Right cardiac atrium (tissue), 5 donors: ENCODE measurements at regions of chr5 and their contacts with region 1.

Region 1: DNA sequence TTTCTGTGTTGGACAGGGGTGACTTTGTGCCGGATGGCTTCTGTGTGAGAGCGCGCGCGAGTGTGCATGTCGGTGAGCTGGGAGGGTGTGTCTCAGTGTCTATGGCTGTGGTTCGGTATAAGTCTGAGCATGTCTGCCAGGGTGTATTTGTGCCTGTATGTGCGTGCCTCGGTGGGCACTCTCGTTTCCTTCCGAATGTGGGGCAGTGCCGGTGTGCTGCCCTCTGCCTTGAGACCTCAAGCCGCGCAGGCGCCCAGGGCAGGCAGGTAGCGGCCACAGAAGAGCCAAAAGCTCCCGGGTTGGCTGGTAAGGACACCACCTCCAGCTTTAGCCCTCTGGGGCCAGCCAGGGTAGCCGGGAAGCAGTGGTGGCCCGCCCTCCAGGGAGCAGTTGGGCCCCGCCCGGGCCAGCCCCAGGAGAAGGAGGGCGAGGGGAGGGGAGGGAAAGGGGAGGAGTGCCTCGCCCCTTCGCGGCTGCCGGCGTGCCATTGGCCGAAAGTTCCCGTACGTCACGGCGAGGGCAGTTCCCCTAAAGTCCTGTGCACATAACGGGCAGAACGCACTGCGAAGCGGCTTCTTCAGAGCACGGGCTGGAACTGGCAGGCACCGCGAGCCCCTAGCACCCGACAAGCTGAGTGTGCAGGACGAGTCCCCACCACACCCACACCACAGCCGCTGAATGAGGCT is at the start of gene ADRB2:
- DNase-seq: peak; percentile 95 to 98 (median 97)
- ATAC-seq: peak; percentile 98 to 99
- H3K4me3 ChIP-seq: peak within 1 kb of the TSS; percentile 55
- H3K27ac ChIP-seq: peak within 1 kb of the TSS; percentile 96
- H3K4me1 ChIP-seq: no peaks in the 10 kb centered on the region
- H3K27me3 ChIP-seq: no peaks in the 10 kb centered on the region
- total RNA-seq, gene ADRB2: 5.0 to 9.2 (median 7.9) TPM

Region 2: DNA sequence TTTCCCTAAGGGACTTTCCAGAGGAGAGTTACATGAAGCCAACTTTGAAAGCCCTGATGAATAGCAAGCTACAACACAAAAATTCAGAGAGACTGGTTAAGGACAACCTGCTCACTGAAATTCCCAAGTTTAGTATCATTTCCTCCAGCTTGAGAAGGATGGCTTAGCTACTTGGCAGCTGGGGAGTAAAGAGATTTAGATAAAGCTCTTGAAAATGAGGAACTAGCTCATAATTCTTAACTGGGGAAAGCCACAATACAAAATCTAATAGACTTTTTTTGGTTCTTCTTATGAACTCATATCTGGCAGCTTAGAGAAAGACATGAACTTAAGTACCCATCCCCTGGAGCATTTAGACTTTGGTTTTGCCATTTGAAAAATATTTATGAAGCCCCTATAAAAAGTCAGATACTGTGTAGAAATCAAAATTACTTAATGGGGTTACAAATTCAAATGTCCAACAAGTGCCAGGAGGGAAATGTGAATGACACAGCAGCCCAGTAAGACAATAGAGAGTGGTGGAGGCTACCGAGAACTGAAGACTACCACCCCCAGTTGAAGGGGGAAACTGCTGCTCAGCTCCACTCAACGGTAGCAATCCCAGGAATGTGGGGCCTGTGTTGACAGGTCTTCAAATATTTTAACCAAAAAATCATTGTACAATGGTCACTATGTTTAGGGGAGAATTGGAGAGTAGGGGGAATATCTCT is 79.2 kb before region 1 on chr5:
- intact Hi-C with region 1: loop called in 3 of 4 experiments (anchors 5 kb)
- DNase-seq: no peak
- ATAC-seq: peak; percentile 47 to 51
- H3K4me3 ChIP-seq: no peak overlapping the region
- H3K27ac ChIP-seq: peak overlapping the region; percentile 23
- H3K4me1 ChIP-seq: peaks cover 1% of the 10 kb centered on the region
- H3K27me3 ChIP-seq: no peaks in the 10 kb centered on the region

Region 3: DNA sequence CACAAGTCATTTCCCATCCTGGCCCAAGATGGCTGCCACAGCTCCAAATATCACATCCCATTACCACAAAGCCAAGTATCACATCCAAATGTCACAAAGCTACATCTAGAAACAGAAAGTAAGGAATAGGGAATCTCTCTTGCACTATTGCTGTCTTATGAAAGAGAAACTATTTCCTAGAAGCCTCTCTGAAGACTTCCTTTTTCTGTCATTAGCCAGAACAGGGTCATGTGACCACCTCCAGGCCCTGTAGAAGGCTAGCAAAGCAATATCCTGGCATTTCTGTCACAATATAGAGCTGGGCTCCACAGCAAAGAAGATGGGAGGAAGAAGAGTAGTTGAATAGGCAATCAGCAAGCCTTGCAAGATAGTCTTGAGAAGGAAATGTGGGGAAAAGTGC is 137.5 kb after region 1 on chr5:
- intact Hi-C with region 1: loop called in 2 of 4 experiments (anchors 2 to 10 kb)
- DNase-seq: no peak
- ATAC-seq: peak in 1 of 2 donors; percentile 5
- H3K4me3 ChIP-seq: no peak overlapping the region
- H3K27ac ChIP-seq: no peak overlapping the region
- H3K4me1 ChIP-seq: no peaks in the 10 kb centered on the region
- H3K27me3 ChIP-seq: no peaks in the 10 kb centered on the region

Region 4: GRCh38 chr5:149114403-149115312 is 288.5 kb after region 1 on chr5:
- intact Hi-C with region 1: loop called in 1 of 4 experiments (anchors 10 kb)
- DNase-seq: peak; percentile 42 to 69 (median 66)
- ATAC-seq: peak; percentile 97
- H3K4me3 ChIP-seq: no peak overlapping the region
- H3K27ac ChIP-seq: no peak overlapping the region
- H3K4me1 ChIP-seq: peaks cover 3% of the 10 kb centered on the region
- H3K27me3 ChIP-seq: no peaks in the 10 kb centered on the region

Region 5: DNA sequence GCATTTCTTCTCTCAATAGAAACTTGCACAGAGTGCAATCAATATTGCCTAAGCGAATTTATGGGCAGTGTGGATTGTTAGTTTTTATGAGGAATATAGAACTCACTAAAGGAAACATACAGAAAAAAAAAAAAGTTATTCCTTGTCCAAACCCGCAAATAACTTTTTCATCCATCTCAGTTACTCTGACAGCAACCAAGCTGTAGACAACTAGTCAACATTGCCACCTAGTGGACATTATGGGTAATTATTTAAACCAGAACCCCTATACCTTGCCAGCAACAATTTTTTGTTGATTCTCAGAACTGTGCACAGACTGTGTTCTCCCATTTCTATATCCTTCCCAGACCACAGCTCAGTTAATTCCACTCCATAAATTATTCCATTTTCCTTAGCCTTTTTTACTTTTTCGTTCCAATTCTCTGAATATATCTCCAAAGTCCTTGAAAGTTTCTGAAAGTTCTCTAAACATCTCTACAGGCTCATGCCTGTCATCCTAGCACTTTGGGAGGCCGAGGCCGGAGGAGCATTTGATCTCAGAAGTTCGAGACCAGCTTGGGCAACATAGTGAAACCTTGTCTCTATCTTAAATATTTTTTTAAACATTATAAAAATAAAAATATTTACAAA is 442.8 kb after region 1 on chr5:
- intact Hi-C with region 1: no loop called
- DNase-seq: no peak
- ATAC-seq: no peak
- H3K4me3 ChIP-seq: no peak overlapping the region
- H3K27ac ChIP-seq: no peak overlapping the region
- H3K4me1 ChIP-seq: peaks cover 2% of the 10 kb centered on the region
- H3K27me3 ChIP-seq: no peaks in the 10 kb centered on the region

Region 6: GRCh38 chr5:149724130-149724840 is 898.1 kb after region 1 on chr5:
- intact Hi-C with region 1: no loop called
- DNase-seq: no peak
- ATAC-seq: no peak
- H3K4me3 ChIP-seq: no peak overlapping the region
- H3K27ac ChIP-seq: no peak overlapping the region
- H3K4me1 ChIP-seq: no peaks in the 10 kb centered on the region
- H3K27me3 ChIP-seq: no peaks in the 10 kb centered on the region